ENCODE measurements at regions of chr5 and their contacts with region 1.

Region 1: DNA sequence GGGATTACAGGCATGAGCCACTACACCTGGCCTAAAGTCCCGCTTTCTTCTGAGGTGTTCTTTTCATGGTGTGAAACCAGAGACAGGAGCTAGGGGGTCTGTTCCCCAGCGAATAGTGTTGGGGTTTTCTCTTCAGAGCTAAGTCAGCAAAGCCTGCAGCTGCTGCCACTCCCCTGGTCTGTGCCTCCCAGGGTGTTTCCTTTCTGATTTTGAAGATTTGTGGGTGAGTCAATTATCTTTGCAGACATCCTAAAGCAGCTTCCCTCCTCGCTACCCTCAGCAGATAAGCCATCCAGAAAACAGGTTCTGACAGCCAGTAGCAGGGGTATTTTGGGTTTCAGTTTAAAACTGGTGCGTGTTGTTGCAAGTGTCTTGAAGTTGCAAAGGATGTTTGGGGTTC is 72.0 kb upstream of the IQGAP2 start:
- DNase-seq: peak; percentile 55
- H3K4me3 Mint-ChIP-seq: no peak overlapping the region
- H3K27ac Mint-ChIP-seq: no peak overlapping the region
- H3K4me1 Mint-ChIP-seq: peaks cover 51% of the 10 kb centered on the region
- H3K27me3 Mint-ChIP-seq: no peaks in the 10 kb centered on the region

Region 2: DNA sequence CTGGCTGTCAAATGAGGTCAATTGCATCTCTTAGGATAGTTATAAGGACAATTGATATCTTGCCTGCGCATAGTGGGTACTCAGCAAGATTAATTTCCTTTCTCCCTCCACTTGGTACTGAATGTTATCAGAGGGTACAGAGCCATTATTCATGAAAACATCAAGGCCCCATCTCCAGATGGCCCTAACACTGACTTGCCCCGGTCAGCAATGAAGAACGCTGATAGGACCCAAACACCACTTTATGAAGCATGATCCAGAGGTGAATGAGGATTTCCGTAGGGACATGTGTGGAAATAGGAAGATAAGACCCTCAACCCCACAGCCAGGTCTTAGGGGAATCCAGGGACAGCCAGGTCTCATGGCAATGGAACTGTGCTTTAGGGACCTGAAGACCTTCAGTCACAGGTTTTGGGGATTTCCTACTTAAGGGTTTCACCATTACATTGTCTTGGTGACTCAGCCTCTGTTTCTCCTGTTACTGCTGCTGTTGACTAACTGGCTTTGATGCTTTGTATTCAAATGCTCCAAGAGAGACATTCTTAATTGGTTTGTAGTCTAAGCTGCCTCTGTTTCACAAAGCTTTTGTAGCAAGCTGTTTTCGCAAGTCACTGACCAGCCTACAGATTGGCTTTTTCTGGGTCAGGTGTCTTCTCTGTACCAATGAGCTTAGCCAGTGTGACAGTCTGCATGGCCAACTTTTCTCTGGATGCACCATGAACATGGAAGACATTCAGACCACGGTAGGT is 36.7 kb after region 1 on chr5:
- CTCF ChIA-PET with region 1: no interaction called
- intact Hi-C with region 1: loop called (anchors 2 kb)
- DNase-seq: peak; percentile 65
- H3K4me3 Mint-ChIP-seq: no peak overlapping the region
- H3K27ac Mint-ChIP-seq: peak overlapping the region; percentile 88
- H3K4me1 Mint-ChIP-seq: peaks cover 27% of the 10 kb centered on the region
- H3K27me3 Mint-ChIP-seq: no peaks in the 10 kb centered on the region

Region 3: DNA sequence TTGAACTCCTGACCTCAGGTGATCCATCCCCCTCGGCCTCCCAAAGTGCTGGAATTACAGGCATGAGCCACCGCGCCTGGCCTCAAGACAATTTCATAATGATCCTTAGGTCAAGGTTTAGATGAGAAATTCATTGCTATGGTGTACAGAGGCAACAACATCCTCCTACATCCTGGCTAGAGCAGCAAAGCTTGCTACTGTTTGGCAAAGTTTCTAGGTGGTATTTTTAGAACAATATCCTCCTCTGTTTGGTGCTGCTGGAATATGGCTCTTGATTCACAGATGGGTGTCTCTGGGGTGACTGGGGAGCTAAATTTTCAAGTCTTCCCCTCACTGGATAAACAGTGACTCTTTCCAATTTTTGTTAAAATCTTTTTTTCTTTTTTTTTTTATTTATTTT is 652.3 kb after region 1 on chr5:
- CTCF ChIA-PET with region 1: no interaction called
- intact Hi-C with region 1: no loop called
- DNase-seq: no peak
- H3K4me3 Mint-ChIP-seq: no peak overlapping the region
- H3K27ac Mint-ChIP-seq: no peak overlapping the region
- H3K4me1 Mint-ChIP-seq: no peaks in the 10 kb centered on the region
- H3K27me3 Mint-ChIP-seq: no peaks in the 10 kb centered on the region

Measured in activated naive CD4-positive, alpha-beta T cell treated with anti-CD3 and anti-CD28 coated beads for 36 hours (primary cell).